Activated CD4-positive, alpha-beta T cell treated with anti-CD3 and anti-CD28 coated beads, Interleukin-2, amount 10 ng/mL, durations not matched to agents 24 days and 14 days (primary cell): ENCODE measurements at regions of chr19 and their contacts with region 1.

Region 1: DNA sequence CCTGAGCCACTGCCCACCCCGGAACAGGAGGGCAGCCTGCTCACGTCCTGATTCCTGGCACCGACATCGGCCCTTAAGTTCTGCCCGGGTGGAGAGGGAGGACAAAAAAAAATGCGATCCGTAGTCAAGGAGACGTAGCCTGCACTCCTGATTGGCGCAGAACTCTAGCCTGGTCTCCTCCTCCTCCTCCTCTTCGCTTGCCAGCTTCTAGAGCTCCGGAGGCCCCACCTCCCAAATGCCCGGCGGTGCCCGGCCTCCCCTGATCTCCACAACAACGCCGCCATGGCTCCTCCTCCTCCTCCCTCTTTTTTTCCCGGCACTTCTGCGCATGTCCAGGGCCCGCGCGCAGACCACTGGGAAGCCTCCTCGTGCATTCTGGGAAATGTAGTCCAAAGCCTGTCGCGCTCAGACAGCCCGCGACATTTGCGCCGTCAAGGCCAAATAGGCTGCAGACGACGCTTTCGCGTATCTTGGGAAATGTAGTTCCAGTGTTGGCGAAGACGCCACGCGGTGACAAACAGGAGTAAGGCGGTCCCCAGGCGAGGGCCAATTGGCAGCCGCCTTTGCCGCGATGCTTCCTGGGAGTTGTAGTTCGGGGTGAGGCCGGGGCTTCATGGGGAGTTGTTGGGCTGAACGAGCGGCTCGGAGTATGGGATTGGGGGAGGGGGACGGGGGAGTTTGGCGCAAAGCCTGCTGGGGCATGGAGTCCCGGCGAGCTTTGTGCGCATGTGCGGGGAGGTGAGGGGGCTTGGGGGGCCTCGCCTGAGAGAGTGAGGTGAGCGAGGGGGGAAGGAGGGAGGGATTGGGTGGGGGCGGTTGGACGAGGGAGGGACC is at the start of gene ZNF444:
- DNase-seq: peak; percentile 100
- H3K4me3 Mint-ChIP-seq: peak within 1 kb of the TSS; percentile 94
- H3K27ac Mint-ChIP-seq: peak within 1 kb of the TSS; percentile 91
- H3K4me1 Mint-ChIP-seq: peaks cover 36% of the 10 kb centered on the region
- H3K27me3 Mint-ChIP-seq: peaks cover 4% of the 10 kb centered on the region
- total RNA-seq, gene ZNF444: 35.5 and 35.7 TPM in 2 replicates

Region 2: GRCh38 chr19:56105090-56105701 is 35.6 kb before region 1 on chr19:
- intact Hi-C with region 1: no loop called
- DNase-seq: peak; percentile 86
- H3K4me3 Mint-ChIP-seq: no peak overlapping the region
- H3K27ac Mint-ChIP-seq: peak overlapping the region; percentile 15
- H3K4me1 Mint-ChIP-seq: peaks cover 14% of the 10 kb centered on the region
- H3K27me3 Mint-ChIP-seq: no peaks in the 10 kb centered on the region

Region 3: DNA sequence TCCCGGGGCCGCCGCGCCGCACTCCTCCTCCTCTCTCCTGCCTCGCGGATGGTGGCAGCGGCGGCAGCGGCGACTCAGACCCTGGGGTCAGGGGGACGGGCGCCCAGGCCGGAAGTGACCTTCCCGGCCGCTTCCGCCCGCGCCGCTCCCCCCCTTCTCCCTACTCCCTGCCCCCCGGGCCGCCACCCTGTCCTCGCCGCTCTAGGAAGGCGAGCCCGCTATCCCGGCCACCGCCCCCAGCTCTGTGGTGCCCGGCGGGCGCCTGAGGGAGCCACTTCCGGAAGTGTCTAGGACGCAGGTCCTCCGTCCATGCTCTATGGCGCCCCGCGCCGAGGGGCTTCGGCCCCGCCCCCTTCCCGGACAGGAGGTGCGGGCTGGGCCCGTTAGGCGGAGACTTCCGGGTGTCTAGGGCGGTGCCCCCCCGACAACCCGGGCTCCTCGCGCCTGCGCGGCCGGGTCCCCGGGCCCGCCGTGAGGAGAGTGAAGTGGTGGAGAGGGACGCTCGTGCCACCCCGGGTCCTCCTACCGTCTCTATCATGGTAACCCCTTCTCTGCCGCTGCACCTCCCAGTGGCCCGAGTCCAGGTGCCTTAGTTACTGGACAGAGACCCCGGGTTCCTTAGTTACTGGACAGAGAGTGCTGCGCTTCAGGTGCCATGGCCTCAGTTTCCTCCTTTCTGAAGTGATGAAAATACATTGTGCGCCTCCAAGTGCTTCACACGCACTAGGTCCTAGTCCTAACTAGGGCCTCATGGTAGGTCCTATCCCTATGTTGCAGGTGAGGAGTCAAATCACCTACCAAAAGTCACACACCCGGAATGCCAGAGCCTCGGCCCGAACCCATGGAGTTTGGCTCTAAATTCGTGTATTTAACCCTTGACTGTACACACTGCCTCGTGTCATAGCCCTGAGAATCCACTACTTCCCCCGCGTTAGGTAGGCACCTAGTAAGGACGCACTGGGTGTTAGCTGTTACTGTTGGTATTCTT is 19.3 kb before region 1 on chr19 and contains the start of gene ZNF787:
- intact Hi-C with region 1: loop called (anchors 1 kb)
- DNase-seq: peak; percentile 99
- H3K4me3 Mint-ChIP-seq: peak within 1 kb of the TSS; percentile 90
- H3K27ac Mint-ChIP-seq: peak within 1 kb of the TSS; percentile 97
- H3K4me1 Mint-ChIP-seq: peaks cover 35% of the 10 kb centered on the region
- H3K27me3 Mint-ChIP-seq: peaks cover 2% of the 10 kb centered on the region
- total RNA-seq, gene ZNF787: 36.4 and 37.0 TPM in 2 replicates

Region 4: GRCh38 chr19:56162258-56162657 is 21.5 kb after region 1 on chr19:
- intact Hi-C with region 1: no loop called
- DNase-seq: no peak
- H3K4me3 Mint-ChIP-seq: no peak overlapping the region
- H3K27ac Mint-ChIP-seq: no peak overlapping the region
- H3K4me1 Mint-ChIP-seq: peaks cover 13% of the 10 kb centered on the region
- H3K27me3 Mint-ChIP-seq: no peaks in the 10 kb centered on the region

Region 5: GRCh38 chr19:56221399-56221798 is 80.6 kb after region 1 on chr19:
- intact Hi-C with region 1: no loop called
- DNase-seq: no peak
- H3K4me3 Mint-ChIP-seq: no peak overlapping the region
- H3K27ac Mint-ChIP-seq: no peak overlapping the region
- H3K4me1 Mint-ChIP-seq: peaks cover 4% of the 10 kb centered on the region
- H3K27me3 Mint-ChIP-seq: peaks cover 7% of the 10 kb centered on the region